Prostate gland (tissue), 2 donors: ENCODE measurements at regions of chr13 and their contacts with region 1.

Region 1: DNA sequence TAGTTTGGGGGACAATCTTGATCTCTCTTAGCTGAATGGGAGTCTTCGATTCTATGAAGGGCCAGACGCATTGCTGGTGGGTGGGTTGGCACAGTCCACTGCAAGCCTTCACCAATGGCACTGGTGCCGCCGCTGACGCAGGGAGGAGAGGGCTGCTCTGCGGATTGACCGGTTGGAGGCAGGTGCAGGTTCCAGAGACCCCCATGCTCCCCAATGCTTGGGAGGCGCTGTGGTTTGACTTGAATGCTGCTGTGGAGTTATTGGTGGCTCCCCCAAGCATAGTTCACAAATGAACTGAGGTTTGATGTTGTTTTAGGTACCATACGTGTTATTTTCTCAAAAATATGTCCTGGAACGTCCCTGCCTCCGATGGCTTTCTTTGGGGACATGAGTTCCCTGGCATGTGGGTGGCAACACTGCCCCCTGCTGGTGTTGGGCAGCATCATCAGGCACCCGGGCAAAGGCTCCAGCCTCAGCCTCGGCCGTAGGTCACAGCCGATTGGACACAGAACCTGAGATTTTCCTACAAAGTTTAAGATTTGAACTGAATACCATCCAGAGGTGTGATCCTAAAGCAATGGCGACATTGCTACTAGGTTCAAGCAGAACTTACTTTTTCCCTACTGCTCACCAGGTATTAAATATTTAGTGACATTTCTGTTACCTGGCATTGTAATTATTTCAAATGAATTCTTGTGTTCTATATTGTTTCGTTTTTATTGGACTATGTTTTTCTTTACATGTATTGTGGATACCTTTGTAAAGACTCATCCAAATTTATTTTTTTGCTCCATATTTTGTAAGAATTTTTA is 95.5 kb downstream of the ANKRD10 start:
- DNase-seq: peak; percentile 67
- H3K4me3 ChIP-seq: no peak overlapping the region
- H3K27ac ChIP-seq: no peak overlapping the region
- H3K4me1 ChIP-seq: no peaks in the 10 kb centered on the region
- H3K27me3 ChIP-seq: no peaks in the 10 kb centered on the region
- CTCF ChIP-seq: peak; percentile 95 to 96 (median 96)
- POLR2A ChIP-seq: no peak

Region 2: GRCh38 chr13:110593430-110594130 is 225.8 kb before region 1 on chr13:
- intact Hi-C with region 1: loop called (anchors 5 kb)
- DNase-seq: peak; percentile 39
- H3K4me3 ChIP-seq: no peak overlapping the region
- H3K27ac ChIP-seq: no peak overlapping the region
- H3K4me1 ChIP-seq: no peaks in the 10 kb centered on the region
- H3K27me3 ChIP-seq: no peaks in the 10 kb centered on the region
- CTCF ChIP-seq: peak; percentile 40 to 74 (median 66)
- POLR2A ChIP-seq: no peak